Activated CD4-positive, alpha-beta memory T cell treated with anti-CD3 and anti-CD28 coated beads for 36 hours (primary cell): ENCODE measurements at regions of chr4 and their contacts with region 1.

Region 1: DNA sequence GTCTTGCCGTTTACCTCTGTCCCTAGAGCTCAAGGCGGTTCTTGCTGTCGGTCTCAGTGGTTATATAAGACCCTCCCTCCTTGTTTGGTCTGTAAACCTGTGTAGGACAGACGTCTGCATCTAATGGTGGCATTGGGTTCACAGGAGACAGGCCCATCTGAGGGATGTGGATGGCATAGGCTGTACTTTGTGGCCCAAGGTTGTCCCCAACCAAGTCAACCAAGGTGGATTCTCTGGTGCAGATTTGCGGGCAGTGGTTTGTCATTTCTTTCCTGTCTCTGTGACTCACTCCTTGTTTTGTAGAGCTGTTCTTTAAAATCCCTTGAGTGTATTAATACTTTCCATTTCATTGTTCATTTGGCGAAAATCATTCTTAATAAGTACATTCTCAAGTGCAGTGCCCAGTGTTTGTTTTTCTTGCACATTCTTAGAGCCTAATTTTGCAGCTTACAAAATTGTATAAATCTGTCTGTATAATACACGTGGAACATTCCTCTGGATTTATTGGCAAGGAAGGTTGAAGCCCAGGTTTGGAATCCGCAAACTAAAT is 68.0 kb upstream of the TLR2 start:
- DNase-seq: peak; percentile 84
- H3K4me3 Mint-ChIP-seq: no peak overlapping the region
- H3K27ac Mint-ChIP-seq: peak overlapping the region; percentile 56
- H3K4me1 Mint-ChIP-seq: peaks cover 30% of the 10 kb centered on the region
- H3K27me3 Mint-ChIP-seq: no peaks in the 10 kb centered on the region

Region 2: GRCh38 chr4:152956650-152957436 is 659.2 kb before region 1 on chr4:
- CTCF ChIA-PET with region 1: no interaction called
- POLR2A ChIA-PET with region 1: no interaction called
- intact Hi-C with region 1: no loop called
- DNase-seq: no peak
- H3K4me3 Mint-ChIP-seq: no peak overlapping the region
- H3K27ac Mint-ChIP-seq: no peak overlapping the region
- H3K4me1 Mint-ChIP-seq: no peaks in the 10 kb centered on the region
- H3K27me3 Mint-ChIP-seq: no peaks in the 10 kb centered on the region

Region 3: DNA sequence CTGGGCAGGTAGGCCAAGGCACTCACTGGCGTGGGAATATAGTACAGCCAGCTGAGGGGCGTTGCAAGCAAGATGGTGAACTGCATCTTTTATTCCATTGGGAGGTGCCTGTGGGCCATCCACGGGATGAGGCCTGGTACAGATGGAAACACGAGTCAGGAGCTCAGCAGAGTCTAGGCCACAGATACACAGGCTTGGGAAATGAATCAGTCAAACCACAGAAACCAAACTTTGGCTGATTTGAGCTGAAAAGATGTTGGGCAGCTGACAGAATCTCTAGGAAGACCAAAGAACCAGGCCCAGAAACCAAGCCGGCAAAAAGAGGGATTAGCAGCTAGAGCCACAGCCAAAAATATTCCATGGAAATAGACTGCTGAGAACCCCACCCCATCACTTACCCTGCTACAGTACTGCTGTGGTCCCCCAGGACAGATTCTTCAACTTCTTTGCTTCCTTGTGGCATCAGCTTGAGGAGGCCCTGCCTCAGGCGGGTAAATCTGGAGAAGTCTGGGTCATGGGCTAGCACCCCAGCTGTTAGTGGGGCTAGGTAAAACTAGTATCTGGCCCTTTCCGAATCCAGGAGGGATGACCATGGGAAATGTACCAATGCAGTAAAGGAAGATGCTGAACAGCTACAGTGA is 74.5 kb before region 1 on chr4:
- CTCF ChIA-PET with region 1: no interaction called
- POLR2A ChIA-PET with region 1: no interaction called
- intact Hi-C with region 1: loop called (anchors 1 kb)
- DNase-seq: peak; percentile 68
- H3K4me3 Mint-ChIP-seq: no peak overlapping the region
- H3K27ac Mint-ChIP-seq: peak overlapping the region; percentile 13
- H3K4me1 Mint-ChIP-seq: peaks cover 64% of the 10 kb centered on the region
- H3K27me3 Mint-ChIP-seq: no peaks in the 10 kb centered on the region

Region 4: DNA sequence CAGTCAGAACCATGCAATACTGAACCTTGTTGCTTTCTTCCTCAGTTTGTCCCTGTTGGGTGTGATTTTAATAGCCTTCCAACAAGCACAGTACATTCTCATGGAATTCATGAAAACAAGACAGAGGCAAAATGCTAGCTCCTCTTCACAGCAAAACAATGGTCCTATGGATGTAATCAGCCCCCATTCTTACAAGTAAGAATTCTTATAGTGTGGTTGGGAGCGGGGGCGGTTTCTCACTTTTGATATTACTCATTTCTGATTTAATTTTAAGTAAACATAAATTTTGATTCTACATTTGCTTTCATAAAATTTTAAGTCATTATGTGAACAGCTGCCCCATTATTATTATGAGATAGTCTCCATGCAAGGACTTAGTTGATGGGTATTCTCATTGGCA is 12.8 kb before region 1 on chr4:
- CTCF ChIA-PET with region 1: no interaction called
- POLR2A ChIA-PET with region 1: interaction called, 5 read pairs
- intact Hi-C with region 1: loop called (anchors 2 kb)
- DNase-seq: peak; percentile 51
- H3K4me3 Mint-ChIP-seq: no peak overlapping the region
- H3K27ac Mint-ChIP-seq: no peak overlapping the region
- H3K4me1 Mint-ChIP-seq: peaks cover 12% of the 10 kb centered on the region
- H3K27me3 Mint-ChIP-seq: no peaks in the 10 kb centered on the region

Region 5: GRCh38 chr4:153873741-153874140 is 257.7 kb after region 1 on chr4:
- CTCF ChIA-PET with region 1: no interaction called
- POLR2A ChIA-PET with region 1: no interaction called
- intact Hi-C with region 1: no loop called
- DNase-seq: no peak
- H3K4me3 Mint-ChIP-seq: no peak overlapping the region
- H3K27ac Mint-ChIP-seq: no peak overlapping the region
- H3K4me1 Mint-ChIP-seq: no peaks in the 10 kb centered on the region
- H3K27me3 Mint-ChIP-seq: peaks cover 10% of the 10 kb centered on the region